Colonic mucosa (tissue), 4 donors: ENCODE measurements at regions of chr14 and their contacts with region 1.

Region 1: GRCh38 chr14:68824517-68825347 is 31.9 kb upstream of the ZFP36L1 start:
- DNase-seq: peak; percentile 92
- H3K4me3 ChIP-seq: no peak overlapping the region
- H3K27ac ChIP-seq: no peak overlapping the region
- H3K4me1 ChIP-seq: no peaks in the 10 kb centered on the region
- H3K27me3 ChIP-seq: no peaks in the 10 kb centered on the region
- CTCF ChIP-seq: peak; percentile 95

Region 2: GRCh38 chr14:67837011-67837624 is 987.6 kb before region 1 on chr14:
- intact Hi-C with region 1: loop called (anchors 10 kb)
- DNase-seq: peak; percentile 80
- H3K4me3 ChIP-seq: no peak overlapping the region
- H3K27ac ChIP-seq: no peak overlapping the region
- H3K4me1 ChIP-seq: no peaks in the 10 kb centered on the region
- H3K27me3 ChIP-seq: no peaks in the 10 kb centered on the region
- CTCF ChIP-seq: peak; percentile 34

Region 3: GRCh38 chr14:67928375-67928774 is 896.4 kb before region 1 on chr14:
- intact Hi-C with region 1: loop called (anchors 5 kb)
- DNase-seq: no peak
- H3K4me3 ChIP-seq: no peak overlapping the region
- H3K27ac ChIP-seq: no peak overlapping the region
- H3K4me1 ChIP-seq: no peaks in the 10 kb centered on the region
- H3K27me3 ChIP-seq: no peaks in the 10 kb centered on the region
- CTCF ChIP-seq: no peak

Region 4: DNA sequence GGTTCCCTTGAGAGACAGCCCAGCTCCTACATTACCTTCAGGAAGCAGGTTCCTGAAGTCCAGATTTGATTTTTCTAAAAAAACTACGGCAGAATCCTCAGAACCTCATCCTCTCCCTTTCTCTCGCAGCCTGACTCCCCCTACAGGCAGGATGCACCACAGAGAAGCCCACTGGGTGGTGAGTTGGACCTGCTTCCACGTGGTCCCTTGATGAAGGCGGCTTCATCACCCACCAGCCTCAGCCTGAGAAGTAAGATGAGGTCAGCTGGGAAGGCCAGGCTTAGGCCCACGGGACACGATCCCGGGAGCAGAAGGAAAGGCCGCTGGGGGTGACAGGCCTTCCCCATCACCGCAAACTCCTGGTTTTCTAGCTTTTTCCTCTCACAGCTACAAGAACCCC is 71.4 kb after region 1 on chr14:
- intact Hi-C with region 1: no loop called
- DNase-seq: no peak
- H3K4me3 ChIP-seq: no peak overlapping the region
- H3K27ac ChIP-seq: no peak overlapping the region
- H3K4me1 ChIP-seq: no peaks in the 10 kb centered on the region
- H3K27me3 ChIP-seq: no peaks in the 10 kb centered on the region
- CTCF ChIP-seq: no peak